Ascending aorta (tissue), 2 donors: ENCODE measurements at regions of chr11 and their contacts with region 1.

Region 1: DNA sequence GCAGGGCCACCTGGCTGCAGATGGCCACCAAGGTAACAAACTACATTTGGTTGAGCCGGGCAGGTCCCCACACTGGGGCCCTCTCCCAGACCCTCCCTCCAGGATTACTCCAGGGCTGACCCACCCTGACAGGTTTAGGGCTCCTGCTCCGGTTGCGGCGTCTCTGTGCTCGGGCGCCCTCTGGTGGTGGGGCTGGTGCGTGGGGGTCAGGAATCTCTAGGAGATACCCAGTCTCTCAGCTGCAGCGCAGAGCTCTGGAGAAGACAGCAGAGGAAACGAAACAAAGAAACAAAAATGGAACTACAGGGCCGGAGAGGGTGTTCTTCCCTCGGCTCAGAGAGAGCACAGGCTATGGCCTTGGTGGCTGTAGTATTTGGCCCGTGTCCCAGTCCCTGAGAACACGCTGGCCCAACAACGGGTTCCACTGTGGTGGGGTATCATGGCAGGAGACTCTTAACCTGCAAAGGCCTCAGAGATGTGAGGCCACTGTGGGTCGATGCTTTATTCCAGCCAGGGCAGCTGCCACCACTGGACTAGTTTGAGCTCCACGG is 2.4 kb downstream of the C11orf96 start:
- DNase-seq: peak in 1 of 2 donors; percentile 86
- H3K4me3 ChIP-seq: peak overlapping the region; percentile 69 to 98
- H3K27ac ChIP-seq: peak overlapping the region; percentile 95 to 99
- H3K4me1 ChIP-seq: peaks cover 0 to 18% of the 10 kb centered on the region in 2 donors
- H3K27me3 ChIP-seq: no peaks in the 10 kb centered on the region
- CTCF ChIP-seq: peak; percentile 81 to 90 (median 83)

Region 2: GRCh38 chr11:43694477-43694876 is 250.4 kb before region 1 on chr11:
- intact Hi-C with region 1: no loop called
- DNase-seq: no peak
- H3K4me3 ChIP-seq: no peak overlapping the region
- H3K27ac ChIP-seq: no peak overlapping the region
- H3K4me1 ChIP-seq: no peaks in the 10 kb centered on the region
- H3K27me3 ChIP-seq: no peaks in the 10 kb centered on the region
- CTCF ChIP-seq: no peak

Region 3: DNA sequence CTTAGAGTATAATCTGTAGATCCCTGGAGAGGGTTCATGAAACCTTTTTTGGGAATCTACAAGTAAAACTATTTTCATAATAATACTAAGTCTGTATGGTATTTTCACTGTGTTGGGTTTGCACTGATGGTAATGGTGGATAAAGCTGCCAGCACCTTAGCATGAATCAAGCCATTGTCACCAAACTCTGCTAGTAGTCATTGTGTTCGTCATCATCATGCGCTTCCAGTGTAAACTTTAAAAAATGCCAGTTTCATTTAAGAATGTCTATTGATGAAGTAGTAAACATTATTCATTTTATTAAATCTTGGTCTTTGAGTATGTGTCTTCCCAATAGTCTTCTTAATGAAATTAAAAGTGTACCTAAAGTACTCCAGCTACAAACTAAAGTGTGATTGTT is 49.2 kb before region 1 on chr11:
- intact Hi-C with region 1: loop called (anchors 1 kb)
- DNase-seq: no peak
- H3K4me3 ChIP-seq: no peak overlapping the region
- H3K27ac ChIP-seq: peak overlapping the region; percentile 41 to 42
- H3K4me1 ChIP-seq: no peaks in the 10 kb centered on the region
- H3K27me3 ChIP-seq: no peaks in the 10 kb centered on the region
- CTCF ChIP-seq: no peak

Region 4: GRCh38 chr11:43987384-43988039 is 42.7 kb after region 1 on chr11:
- intact Hi-C with region 1: loop called (anchors 2 kb)
- DNase-seq: peak; percentile 54 to 94
- H3K4me3 ChIP-seq: peak overlapping the region in 1 of 2 donors; percentile 12
- H3K27ac ChIP-seq: peak overlapping the region; percentile 77 to 83
- H3K4me1 ChIP-seq: peaks cover 9 to 32% of the 10 kb centered on the region in 2 donors
- H3K27me3 ChIP-seq: no peaks in the 10 kb centered on the region
- CTCF ChIP-seq: no peak

Region 5: GRCh38 chr11:44016131-44016530 is 71.3 kb after region 1 on chr11:
- intact Hi-C with region 1: loop called (anchors 5 kb)
- DNase-seq: peak; percentile 67 to 94
- H3K4me3 ChIP-seq: no peak overlapping the region
- H3K27ac ChIP-seq: peak overlapping the region; percentile 83 to 93
- H3K4me1 ChIP-seq: peaks cover 9 to 57% of the 10 kb centered on the region in 2 donors
- H3K27me3 ChIP-seq: no peaks in the 10 kb centered on the region
- CTCF ChIP-seq: no peak

Region 6: DNA sequence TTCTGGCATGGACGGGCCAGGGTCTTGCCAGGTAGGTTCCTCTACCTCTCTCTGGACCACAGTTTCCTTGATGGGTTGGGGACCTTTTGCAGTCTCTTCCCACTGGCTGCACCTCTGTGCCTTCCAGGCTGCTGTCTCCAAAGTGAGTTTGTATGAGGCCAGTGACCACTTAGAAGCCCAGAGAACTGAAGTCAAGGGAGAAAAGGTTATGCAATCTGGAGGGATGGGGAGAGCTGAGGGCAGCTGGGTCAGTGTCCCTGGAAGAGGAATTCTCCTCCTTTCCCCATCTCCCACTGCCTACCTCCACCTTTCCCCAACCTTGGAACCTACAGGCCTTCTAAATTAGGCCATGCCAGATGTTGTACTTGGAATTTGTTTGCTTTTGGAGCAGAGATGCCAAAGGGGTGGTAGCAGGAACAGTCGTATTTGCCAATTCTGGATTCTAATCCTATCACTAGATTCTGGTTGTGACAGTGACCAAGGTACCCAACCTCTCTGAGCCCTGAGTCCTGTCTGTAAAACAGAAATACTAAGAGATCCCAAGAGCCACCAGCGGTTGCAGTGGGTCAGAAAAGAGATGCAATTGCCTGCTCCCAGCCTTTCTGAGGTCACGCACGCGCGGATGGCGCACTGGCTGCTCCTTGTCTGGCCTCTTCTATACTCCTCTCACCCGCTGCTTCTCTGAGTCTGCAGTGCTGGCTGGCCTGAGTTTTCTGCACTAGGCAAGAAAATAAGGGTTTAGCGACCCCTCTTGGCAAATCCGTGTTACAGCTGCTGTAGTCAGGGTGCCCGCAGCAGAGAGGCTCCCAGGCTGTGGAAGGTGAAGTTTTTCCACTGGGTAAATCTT is 92.2 kb after region 1 on chr11:
- intact Hi-C with region 1: loop called (anchors 1 kb)
- DNase-seq: peak; percentile 64 to 95
- H3K4me3 ChIP-seq: no peak overlapping the region
- H3K27ac ChIP-seq: peak overlapping the region; percentile 92 to 96
- H3K4me1 ChIP-seq: peaks cover 14 to 25% of the 10 kb centered on the region in 2 donors
- H3K27me3 ChIP-seq: no peaks in the 10 kb centered on the region
- CTCF ChIP-seq: peak; percentile 84 to 92 (median 88)